OCI-LY7 (cell line): ENCODE measurements at regions of chr1 and their contacts with region 1.

Region 1: GRCh38 chr1:235075188-235075926 is 53.3 kb downstream of the TOMM20 start:
- DNase-seq: peak; percentile 57
- H3K4me3 ChIP-seq: peak overlapping the region; percentile 23
- H3K27ac ChIP-seq: peak overlapping the region; percentile 62
- H3K4me1 ChIP-seq: peaks cover 70% of the 10 kb centered on the region
- CTCF ChIP-seq: no peak

Region 2: GRCh38 chr1:234486498-234487448 is 588.6 kb before region 1 on chr1:
- CTCF ChIA-PET with region 1: no interaction called
- POLR2A ChIA-PET with region 1: no interaction called
- intact Hi-C with region 1: loop called (anchors 2 kb)
- DNase-seq: peak; percentile 77
- H3K4me3 ChIP-seq: peak overlapping the region; percentile 25
- H3K27ac ChIP-seq: no peak overlapping the region
- H3K4me1 ChIP-seq: peaks cover 42% of the 10 kb centered on the region
- CTCF ChIP-seq: peak; percentile 97

Region 3: DNA sequence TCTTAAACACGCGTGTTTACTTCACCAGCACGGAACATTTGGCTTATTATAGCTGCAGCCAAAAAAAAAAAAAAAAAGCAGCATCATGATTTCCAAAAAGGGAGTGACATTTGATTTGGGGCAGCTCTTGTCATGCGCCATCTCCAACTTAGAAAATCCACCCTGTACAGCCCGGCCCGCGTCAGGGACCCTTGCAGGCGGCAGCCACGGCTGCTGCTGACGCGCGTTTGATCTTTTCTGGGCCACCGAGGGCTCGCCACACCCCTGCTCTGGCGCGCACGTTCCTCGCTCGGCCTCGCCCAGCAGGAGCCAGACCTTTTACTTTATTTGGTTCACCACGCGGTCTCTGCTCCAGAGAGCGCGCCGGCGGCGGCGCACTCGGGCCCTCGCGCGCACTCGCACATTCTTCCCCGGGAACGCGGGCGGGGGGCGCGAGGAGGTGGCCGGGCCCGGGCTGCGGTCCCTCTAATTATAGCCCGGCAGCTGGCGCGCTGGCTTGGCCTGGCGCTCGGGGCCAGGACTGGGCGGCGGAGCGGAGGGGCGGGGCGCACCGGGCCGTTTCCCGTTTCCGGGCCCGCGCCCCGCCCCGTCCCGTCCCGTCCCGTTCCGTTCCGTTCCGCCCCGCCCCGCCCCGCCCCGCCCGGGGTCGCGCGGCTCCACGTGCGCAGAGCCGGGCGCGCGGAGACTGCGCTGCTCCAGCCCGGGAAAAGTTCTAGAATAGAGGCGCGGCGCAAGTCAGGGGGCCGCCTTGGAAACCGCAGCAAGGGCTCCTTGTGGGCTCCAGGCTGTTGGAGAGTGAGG is 475.5 kb before region 1 on chr1:
- CTCF ChIA-PET with region 1: no interaction called
- POLR2A ChIA-PET with region 1: interaction called, 3 read pairs
- intact Hi-C with region 1: loop called (anchors 2 kb)
- DNase-seq: peak; percentile 88
- H3K4me3 ChIP-seq: peak overlapping the region; percentile 69
- H3K27ac ChIP-seq: peak overlapping the region; percentile 93
- H3K4me1 ChIP-seq: peaks cover 69% of the 10 kb centered on the region
- CTCF ChIP-seq: 0 out of 2 replicates have a peak, but pooled peaks have one; percentile 15

Region 4: DNA sequence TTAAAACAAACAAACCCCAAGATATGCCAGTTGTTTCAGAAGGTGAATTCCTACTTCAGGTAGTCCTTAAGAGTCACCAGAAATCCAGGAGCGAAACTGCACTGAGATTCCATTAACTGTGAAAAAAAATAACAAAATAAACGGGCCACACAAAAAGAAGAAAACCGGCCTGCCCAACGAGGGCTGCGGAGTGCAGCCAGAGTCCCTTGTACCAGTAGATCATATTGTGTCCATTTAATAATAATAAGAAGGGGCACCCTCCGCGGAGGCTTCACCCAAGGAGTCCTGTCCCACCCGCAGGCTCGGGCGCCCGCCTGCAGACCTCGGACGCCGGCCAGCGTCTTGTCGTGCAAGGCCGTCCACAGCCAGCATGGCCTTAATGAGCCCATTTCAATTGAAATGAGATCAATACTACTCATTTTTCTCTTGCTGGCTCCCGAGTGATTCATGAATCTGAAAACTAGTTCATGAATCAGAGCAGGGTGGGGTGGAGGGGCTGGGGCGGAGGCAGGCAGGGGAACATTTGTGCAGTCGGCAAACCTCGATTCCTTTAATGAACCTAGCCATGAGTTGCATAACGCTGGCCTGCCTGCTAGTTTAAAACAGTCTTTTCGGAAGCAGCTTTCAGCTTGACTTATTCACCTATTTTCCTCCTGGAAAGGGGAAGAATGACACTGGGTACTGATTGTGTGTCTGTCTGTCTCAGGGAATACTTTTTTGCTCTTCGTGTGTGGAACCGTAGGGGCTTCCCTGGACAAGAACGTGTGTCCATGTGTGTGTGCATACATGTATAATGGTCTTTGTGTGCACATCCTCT is 352.2 kb before region 1 on chr1:
- CTCF ChIA-PET with region 1: no interaction called
- POLR2A ChIA-PET with region 1: interaction called, 3 read pairs
- intact Hi-C with region 1: loop called (anchors 5 kb)
- DNase-seq: peak; percentile 10
- H3K4me3 ChIP-seq: peak overlapping the region; percentile 27
- H3K27ac ChIP-seq: peak overlapping the region; percentile 65
- H3K4me1 ChIP-seq: peaks cover 50% of the 10 kb centered on the region
- CTCF ChIP-seq: no peak

Region 5: GRCh38 chr1:234772345-234773147 is 302.8 kb before region 1 on chr1:
- CTCF ChIA-PET with region 1: no interaction called
- POLR2A ChIA-PET with region 1: interaction called, 3 read pairs
- intact Hi-C with region 1: loop called (anchors 5 kb)
- DNase-seq: peak; percentile 88
- H3K4me3 ChIP-seq: peak overlapping the region; percentile 39
- H3K27ac ChIP-seq: peak overlapping the region; percentile 66
- H3K4me1 ChIP-seq: peaks cover 33% of the 10 kb centered on the region
- CTCF ChIP-seq: no peak

Region 6: DNA sequence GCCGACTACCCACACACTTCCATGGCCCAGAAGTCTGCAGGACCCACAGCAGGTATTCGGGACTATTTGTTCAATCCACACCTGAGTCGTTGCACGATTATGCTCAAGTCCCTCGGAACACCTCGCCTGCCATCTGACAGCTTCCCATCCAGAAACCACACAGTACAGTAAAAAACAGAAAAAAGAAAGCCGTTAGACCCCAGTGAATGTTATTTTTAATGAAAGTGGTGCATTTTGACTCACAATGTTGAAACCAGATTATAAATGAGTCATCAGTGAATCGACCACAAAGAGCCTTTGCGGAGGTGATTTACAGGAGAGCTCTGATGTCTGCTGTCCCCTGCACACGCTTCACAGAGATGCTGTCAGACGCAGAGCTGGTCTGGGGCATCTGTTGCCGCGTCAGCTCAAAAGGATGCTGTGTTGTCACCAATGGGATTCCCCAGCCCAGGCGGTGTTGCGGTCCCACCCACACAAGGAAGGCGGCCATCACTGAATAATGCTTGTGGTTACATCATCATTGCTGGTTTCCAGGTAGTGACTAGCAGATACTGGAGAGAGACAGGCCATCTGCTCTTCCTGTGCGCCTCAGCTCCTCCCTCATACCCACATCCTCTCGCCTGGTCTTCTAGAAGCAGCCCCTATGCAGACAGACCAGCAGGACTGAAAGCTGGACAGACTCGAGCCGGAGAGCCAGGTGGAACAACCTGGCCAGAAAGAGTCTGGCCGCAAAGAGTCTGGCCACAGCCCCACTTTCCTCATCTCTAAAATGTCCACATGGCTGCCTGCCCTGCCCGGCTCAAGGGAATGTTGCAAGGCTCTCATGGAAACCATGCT is 63.5 kb before region 1 on chr1:
- CTCF ChIA-PET with region 1: no interaction called
- POLR2A ChIA-PET with region 1: interaction called, 3 read pairs
- intact Hi-C with region 1: loop called (anchors 2 kb)
- DNase-seq: peak; percentile 95
- H3K4me3 ChIP-seq: peak overlapping the region; percentile 64
- H3K27ac ChIP-seq: peak overlapping the region; percentile 87
- H3K4me1 ChIP-seq: peaks cover 91% of the 10 kb centered on the region
- CTCF ChIP-seq: no peak